ENCODE measurements at regions of chr12 and their contacts with region 1.

Region 1: DNA sequence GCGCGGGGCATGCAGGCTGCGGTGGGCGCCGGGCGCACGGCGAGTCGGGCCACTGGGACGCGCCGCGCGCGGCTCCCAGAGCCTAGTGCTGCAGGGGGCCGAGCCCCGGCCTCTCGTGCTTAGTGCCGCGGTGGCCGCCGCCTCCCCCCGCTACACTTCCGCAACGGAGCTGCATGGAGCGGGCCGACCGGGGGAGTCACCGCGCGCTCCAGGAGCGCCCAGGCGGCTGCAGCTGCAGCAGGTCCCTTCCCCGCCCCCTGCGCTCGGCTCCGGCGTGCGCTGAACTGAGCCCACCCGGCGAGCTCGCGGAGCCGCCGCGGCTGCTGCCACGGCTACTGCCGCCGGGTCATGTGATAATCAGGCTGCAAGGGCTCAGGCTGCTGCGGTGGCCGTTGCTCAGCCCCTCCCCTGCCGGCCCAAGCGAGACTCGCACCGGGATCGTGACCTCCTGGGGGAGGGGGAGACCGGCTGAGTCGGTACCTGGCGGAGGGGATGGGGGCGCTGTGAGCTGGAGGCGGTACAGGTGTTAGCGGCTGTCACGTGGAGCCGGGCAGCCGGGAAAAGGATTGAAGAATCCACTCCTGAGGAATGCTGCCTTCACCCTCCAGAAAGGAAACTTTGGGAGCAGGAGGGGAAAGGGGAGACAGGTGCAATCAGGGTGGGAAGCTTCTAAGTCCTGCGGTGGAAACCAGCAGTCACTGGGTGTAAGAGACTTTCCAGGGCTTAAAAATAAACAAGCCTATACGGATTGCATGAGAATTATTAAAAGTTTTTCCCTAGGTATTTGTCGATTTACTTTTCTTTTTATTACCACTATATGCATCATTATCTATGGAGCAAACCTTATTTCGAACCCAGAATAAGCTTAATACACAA is at the start of gene PPM1H:
- DNase-seq: peak; percentile 73
- ATAC-seq: peak; percentile 83 to 88
- total RNA-seq, gene PPM1H: 3.3 to 4.3 TPM

Region 2: GRCh38 chr12:62866451-62867082 is 68.5 kb before region 1 on chr12:
- intact Hi-C with region 1: loop called in 1 of 2 experiments (anchors 10 kb)
- DNase-seq: no peak
- ATAC-seq: peak; percentile 56 to 74

Measured in left cardiac atrium (tissue), 4 donors.